Endothelial cell of umbilical vein (primary cell): ENCODE measurements at regions of chr1 and their contacts with region 1.

Region 1: GRCh38 chr1:179816196-179816960 is 61.2 kb downstream of the TOR1AIP2 start:
- DNase-seq: peak; percentile 88
- H3K4me3 ChIP-seq: no peak overlapping the region
- H3K27ac ChIP-seq: no peak overlapping the region
- H3K4me1 ChIP-seq: peaks cover 20% of the 10 kb centered on the region
- H3K27me3 ChIP-seq: peaks cover 0 to 8% of the 10 kb centered on the region in 2 experiments
- CTCF ChIP-seq: no peak
- POLR2A ChIP-seq: peak; percentile 32

Region 2: GRCh38 chr1:179831852-179832699 is 15.7 kb after region 1 on chr1:
- CTCF ChIA-PET with region 1: interaction called, 96 read pairs
- POLR2A ChIA-PET with region 1: no interaction called
- dilution Hi-C with region 1: no loop called
- intact Hi-C with region 1: no loop called
- DNase-seq: no peak
- H3K4me3 ChIP-seq: no peak overlapping the region
- H3K27ac ChIP-seq: no peak overlapping the region
- H3K4me1 ChIP-seq: no peaks in the 10 kb centered on the region
- H3K27me3 ChIP-seq: peaks cover 0 to 6% of the 10 kb centered on the region in 2 experiments
- CTCF ChIP-seq: no peak
- POLR2A ChIP-seq: no peak

Region 3: GRCh38 chr1:179840107-179840506 is 23.7 kb after region 1 on chr1:
- CTCF ChIA-PET with region 1: interaction called, 96 read pairs
- POLR2A ChIA-PET with region 1: no interaction called
- dilution Hi-C with region 1: no loop called
- intact Hi-C with region 1: loop called (anchors 1 kb)
- DNase-seq: peak; percentile 40
- H3K4me3 ChIP-seq: no peak overlapping the region
- H3K27ac ChIP-seq: no peak overlapping the region
- H3K4me1 ChIP-seq: peaks cover 13% of the 10 kb centered on the region
- H3K27me3 ChIP-seq: no peaks in the 10 kb centered on the region
- CTCF ChIP-seq: no peak
- POLR2A ChIP-seq: no peak

Region 4: GRCh38 chr1:179889589-179889988 is 73.2 kb after region 1 on chr1:
- CTCF ChIA-PET with region 1: no interaction called
- POLR2A ChIA-PET with region 1: no interaction called
- dilution Hi-C with region 1: no loop called
- intact Hi-C with region 1: no loop called
- DNase-seq: no peak
- H3K4me3 ChIP-seq: no peak overlapping the region
- H3K27ac ChIP-seq: no peak overlapping the region
- H3K4me1 ChIP-seq: no peaks in the 10 kb centered on the region
- H3K27me3 ChIP-seq: no peaks in the 10 kb centered on the region
- CTCF ChIP-seq: no peak
- POLR2A ChIP-seq: no peak